Lower leg skin (tissue), 4 donors: ENCODE measurements at regions of chr10 and their contacts with region 1.

Region 1: DNA sequence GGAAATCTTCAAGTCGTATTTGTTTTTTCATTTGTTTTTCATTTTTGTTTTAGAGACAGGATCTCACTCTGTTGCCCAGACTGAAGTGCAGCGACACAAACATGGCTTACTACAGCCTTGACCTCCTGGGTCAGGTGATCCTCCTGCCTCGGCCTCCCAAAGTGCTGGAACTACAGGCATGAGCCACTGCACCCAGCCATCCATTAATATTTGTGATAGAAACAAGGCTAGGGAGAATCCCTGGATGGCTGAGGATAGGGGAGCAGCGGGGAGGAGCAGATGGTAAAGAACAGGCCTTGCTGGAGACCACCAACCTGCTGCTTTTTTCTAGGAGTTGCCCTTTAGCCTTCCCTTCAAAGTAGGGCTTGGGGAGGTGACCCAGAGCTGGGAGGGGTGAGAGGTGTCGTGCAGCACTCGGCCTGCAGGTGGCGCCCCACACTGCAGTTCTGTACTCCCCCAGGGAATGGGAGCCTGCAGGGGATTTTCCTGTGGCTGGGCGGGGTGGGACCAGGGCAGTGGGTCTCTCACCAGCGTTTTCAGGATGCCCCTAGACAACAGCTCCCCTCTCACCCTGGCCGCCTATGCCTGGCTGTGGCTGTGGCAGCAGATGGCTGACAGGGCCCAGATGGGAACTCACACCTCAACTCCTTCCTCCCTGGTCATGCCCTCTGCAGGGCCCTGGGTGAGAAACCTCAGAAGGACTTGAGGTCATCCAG is 12.6 kb upstream of the CDH23 start:
- DNase-seq: peak; percentile 48 to 95
- H3K4me3 ChIP-seq: no peak overlapping the region
- CTCF ChIP-seq: peak in 1 of 3 donors; percentile 33
- POLR2A ChIP-seq: no peak

Region 2: GRCh38 chr10:71371750-71372166 is 12.4 kb before region 1 on chr10:
- intact Hi-C with region 1: no loop called
- DNase-seq: no peak
- H3K4me3 ChIP-seq: no peak overlapping the region
- CTCF ChIP-seq: no peak
- POLR2A ChIP-seq: no peak

Region 3: DNA sequence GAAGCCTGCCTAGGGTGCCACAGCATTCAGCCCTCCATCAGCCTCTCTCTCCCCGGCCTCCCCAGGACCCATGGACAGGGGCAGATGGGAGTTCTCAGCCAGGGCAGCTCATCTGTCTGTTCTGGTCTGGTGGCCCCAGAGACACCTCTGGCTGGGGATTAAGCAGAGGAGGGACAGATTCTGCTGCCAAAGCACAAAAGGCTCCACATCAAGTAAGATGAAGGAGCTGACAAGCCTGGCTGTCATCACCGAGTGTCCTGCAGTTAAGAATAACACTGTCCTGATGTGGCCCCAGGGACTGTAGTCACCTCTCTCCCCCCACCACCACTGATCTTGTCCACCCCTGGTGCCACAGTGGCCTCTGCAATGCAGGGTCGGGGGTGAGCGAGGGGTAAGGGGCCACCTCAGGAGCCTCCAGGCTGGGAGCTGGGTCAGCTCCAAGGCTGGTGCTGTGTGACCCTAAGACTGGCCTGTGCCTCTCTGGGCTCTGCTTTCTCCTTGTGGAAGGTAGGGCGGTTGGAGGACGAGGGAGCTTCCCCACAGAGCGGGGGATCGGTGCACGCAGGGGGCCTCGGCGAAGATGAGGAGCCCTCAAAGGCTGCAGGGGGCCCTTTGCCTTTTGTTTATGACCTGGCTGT is 316.7 kb after region 1 on chr10:
- intact Hi-C with region 1: loop called (anchors 5 kb)
- DNase-seq: no peak
- H3K4me3 ChIP-seq: no peak overlapping the region
- CTCF ChIP-seq: no peak
- POLR2A ChIP-seq: no peak